Calu3 (cell line): ENCODE measurements at regions of chr6 and their contacts with region 1.

Region 1: DNA sequence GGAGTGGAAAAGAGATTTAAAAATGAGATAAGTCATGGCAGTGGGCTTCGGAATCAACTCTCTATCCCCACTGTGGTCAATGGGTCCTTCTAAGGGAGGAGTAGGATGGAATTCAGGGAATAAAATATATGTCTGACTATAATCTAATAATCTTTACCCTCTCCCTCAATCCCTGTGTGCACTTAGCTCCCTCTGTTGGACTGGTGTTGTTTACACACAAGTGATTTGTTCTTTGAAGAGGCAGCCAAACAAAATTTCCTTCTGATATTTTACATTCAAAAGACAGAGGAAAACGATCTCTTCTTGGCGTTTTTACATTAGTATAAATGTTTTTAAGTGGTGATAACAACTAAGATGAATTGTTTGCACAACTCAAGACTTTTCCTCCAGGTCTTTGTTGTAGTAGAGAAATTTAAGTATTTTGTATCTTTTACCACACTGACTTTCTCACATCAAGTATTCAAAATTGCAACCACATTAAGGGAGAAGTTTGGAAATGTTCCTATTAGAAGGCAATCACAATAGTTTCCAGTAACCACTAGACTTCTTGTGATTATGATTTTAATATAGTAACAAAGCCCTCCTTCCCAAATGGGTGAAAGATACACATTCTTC is 317.8 kb downstream of the CENPW start:
- DNase-seq: peak; percentile 18
- H3K4me3 Mint-ChIP-seq: no peak overlapping the region
- H3K27ac Mint-ChIP-seq: no peak overlapping the region
- H3K4me1 Mint-ChIP-seq: no peaks in the 10 kb centered on the region
- H3K27me3 Mint-ChIP-seq: no peaks in the 10 kb centered on the region
- CTCF ChIP-seq: peak; percentile 30

Region 2: DNA sequence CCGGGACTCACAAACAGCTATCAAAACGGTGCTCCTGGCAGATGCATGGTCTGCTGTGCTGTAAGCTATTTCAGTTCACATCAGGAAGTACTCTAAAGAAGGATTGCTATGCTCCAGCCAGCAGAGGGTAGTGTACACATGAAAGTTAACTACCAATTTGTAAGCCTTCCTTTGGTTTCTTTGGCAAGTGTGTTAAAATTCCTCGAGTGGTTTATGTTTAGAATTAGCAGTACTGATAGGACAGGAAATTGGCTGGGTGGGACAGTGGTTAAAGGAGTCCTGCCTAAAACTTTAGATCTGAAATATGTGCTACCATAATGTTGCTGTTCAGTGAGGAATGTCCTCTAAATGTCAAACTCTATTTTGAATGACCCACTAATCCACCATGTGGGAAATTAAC is 624.0 kb before region 1 on chr6:
- CTCF ChIA-PET with region 1: interaction called, 3 read pairs
- intact Hi-C with region 1: loop called (anchors 10 kb)
- DNase-seq: peak; percentile 33
- H3K4me3 Mint-ChIP-seq: no peak overlapping the region
- H3K27ac Mint-ChIP-seq: no peak overlapping the region
- H3K4me1 Mint-ChIP-seq: no peaks in the 10 kb centered on the region
- H3K27me3 Mint-ChIP-seq: no peaks in the 10 kb centered on the region
- CTCF ChIP-seq: no peak

Region 3: DNA sequence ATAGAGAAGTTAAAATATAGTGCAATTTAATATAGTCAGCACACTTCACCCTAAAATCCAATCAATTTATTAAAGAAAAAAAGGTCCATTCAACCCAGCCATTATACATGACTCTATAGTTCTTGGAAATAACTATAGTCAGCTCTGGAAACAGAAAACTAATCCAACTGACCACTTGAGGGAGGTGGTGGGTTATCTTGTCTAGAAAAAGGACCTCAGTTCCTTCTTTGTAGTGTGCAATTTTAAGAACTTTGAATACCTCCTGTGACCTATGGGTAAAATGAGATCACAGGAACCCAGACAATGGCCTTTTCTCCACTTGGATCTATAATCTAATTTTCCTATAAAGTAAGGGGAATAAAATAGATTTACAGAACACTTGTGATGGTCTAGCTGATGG is 481.4 kb before region 1 on chr6:
- CTCF ChIA-PET with region 1: interaction called, 7 read pairs
- intact Hi-C with region 1: loop called (anchors 1 kb)
- DNase-seq: peak; percentile 37
- H3K4me3 Mint-ChIP-seq: no peak overlapping the region
- H3K27ac Mint-ChIP-seq: no peak overlapping the region
- H3K4me1 Mint-ChIP-seq: peaks cover 12% of the 10 kb centered on the region
- H3K27me3 Mint-ChIP-seq: no peaks in the 10 kb centered on the region
- CTCF ChIP-seq: peak; percentile 43

Region 4: DNA sequence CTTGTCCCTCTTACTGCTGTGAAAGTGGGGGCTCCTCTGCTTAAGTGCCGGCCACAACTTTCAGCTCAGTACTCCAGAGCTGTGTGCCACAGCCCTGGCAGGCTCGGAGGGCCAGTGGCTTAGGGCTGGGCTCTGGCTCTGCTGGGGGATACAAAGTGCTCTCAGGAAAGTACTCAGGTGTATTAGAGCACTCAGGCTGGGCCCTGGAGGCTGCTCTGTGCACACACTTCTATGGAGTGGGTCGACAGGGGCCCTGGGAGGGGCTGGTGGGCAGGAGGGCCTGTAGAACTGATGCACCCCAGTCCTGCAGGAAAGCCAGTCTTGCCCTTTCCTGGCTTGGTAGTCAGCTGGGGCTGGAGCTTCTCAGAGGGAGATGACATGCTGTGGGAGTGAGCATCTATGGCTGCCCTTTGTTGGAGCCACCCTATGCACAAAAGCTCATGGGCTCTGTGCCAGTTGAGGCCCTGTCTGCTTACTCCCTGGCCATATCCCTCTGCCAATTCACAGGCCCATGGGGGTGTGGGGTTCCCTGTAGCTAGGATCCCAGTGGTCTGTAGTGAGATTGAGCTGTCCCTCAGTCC is 295.7 kb before region 1 on chr6:
- CTCF ChIA-PET with region 1: interaction called, 3 read pairs
- intact Hi-C with region 1: loop called (anchors 2 kb)
- DNase-seq: no peak
- H3K4me3 Mint-ChIP-seq: no peak overlapping the region
- H3K27ac Mint-ChIP-seq: no peak overlapping the region
- H3K4me1 Mint-ChIP-seq: no peaks in the 10 kb centered on the region
- H3K27me3 Mint-ChIP-seq: no peaks in the 10 kb centered on the region
- CTCF ChIP-seq: no peak